ENCODE measurements at regions of chr6 and their contacts with region 1.

Region 1: GRCh38 chr6:158669145-158670035 is 19.5 kb downstream of the SYTL3 start:
- DNase-seq: no peak
- ATAC-seq: no peak
- H3K4me3 Mint-ChIP-seq: no peak overlapping the region
- H3K27ac Mint-ChIP-seq: peak overlapping the region; percentile 3
- H3K4me1 Mint-ChIP-seq: peaks cover 7% of the 10 kb centered on the region
- H3K27me3 Mint-ChIP-seq: no peaks in the 10 kb centered on the region

Region 2: GRCh38 chr6:158634695-158635426 is 34.5 kb before region 1 on chr6:
- CTCF ChIA-PET with region 1: interaction called, 4 read pairs
- POLR2A ChIA-PET with region 1: no interaction called
- intact Hi-C with region 1: loop called in 1 of 2 experiments (anchors 5 kb)
- DNase-seq: no peak
- ATAC-seq: no peak
- H3K4me3 Mint-ChIP-seq: no peak overlapping the region
- H3K27ac Mint-ChIP-seq: peak overlapping the region; percentile 72
- H3K4me1 Mint-ChIP-seq: peaks cover 70% of the 10 kb centered on the region
- H3K27me3 Mint-ChIP-seq: no peaks in the 10 kb centered on the region

Measured in activated CD4-positive, alpha-beta T cell treated with anti-CD3 and anti-CD28 coated beads for 36 hours (primary cell).